Activated CD8-positive, alpha-beta memory T cell treated with anti-CD3 and anti-CD28 coated beads, Interleukin-2, amount 10 ng/mL, durations not matched to agents 7 days and 5 days (primary cell): ENCODE measurements at regions of chr6 and their contacts with region 1.

Region 1: DNA sequence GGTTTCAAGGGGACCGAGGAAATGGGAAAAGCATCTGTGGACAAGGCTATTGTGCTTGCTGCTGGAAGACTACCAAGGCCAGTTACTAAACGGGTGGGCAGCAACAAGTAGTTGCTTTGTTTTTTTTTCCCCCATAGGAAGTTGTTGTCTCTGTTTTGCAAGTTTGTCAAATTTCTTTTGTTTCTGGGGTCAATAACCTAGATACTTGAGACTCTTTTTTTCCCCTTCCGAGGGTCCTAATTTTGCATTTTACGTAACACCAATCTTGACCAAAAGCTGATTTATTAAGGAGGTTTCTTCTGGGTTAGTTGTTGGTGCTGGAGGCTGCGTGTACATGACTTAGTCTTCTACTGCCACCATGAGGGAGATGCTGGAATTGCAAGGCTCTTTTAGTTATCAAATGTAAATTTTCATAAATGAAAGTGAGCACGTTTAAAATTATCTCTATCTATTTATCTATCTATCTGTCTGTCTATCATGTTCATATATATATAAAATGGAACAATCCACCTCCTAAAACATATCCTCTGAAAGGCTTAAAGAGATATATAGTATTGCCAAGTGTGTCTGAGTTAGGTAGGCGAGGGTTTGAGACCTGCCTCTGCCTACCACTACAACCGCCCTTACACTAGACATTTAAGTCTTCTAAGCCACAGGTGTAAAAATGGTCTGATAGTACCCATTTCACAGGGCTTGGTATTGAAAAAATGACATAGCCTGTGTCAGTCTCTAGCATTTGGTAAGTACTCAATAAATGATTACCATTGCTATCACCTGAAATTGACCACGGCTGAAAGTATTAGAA is 60.2 kb downstream of the GCLC start:
- DNase-seq: peak; percentile 82
- ATAC-seq: peak; percentile 42
- H3K4me3 Mint-ChIP-seq: no peak overlapping the region
- H3K27ac Mint-ChIP-seq: no peak overlapping the region
- H3K4me1 Mint-ChIP-seq: peaks cover 35% of the 10 kb centered on the region
- H3K27me3 Mint-ChIP-seq: peaks cover 30% of the 10 kb centered on the region

Region 2: DNA sequence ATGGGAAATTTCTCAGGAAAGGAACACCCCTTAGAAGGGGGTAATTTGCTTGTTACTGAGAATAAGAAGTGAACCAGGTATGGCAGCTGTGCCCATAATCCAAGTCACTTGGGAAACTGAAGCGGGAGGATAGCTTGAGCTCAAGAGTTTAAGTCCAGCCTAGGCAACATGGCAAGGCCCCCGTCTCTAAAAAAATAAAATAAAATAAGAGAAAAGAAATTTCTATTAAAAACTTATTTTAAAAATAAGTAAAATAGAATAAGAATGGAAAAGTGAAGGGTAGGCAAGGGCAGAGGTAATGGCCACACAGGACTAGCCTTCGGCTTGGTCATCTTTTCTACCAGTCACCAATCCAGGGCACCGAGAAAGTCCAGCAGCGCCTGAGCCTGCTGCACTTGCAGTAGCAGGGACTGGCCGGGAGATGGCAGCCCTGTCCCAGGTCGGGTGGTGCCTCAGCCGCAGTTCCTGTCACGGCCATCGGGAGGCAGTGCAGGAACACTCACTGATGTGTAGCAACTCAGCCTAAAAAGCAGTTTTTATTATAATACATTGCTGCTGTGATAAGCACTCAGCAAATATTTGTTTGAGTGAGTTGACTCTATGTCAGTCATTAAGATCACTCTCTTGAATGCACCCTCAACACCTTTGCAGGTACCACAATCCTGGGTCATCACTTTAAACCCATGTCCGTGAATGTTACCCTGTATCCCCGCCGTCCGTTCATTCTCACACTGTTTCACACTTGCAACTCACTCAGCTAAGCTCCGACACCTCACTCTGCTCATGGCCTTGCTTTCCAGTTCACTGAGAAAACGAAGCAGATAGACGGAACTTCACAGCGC is 312.9 kb before region 1 on chr6:
- CTCF ChIA-PET with region 1: interaction called, 96 read pairs
- DNase-seq: peak; percentile 93
- ATAC-seq: peak; percentile 90
- H3K4me3 Mint-ChIP-seq: no peak overlapping the region
- H3K27ac Mint-ChIP-seq: no peak overlapping the region
- H3K4me1 Mint-ChIP-seq: no peaks in the 10 kb centered on the region
- H3K27me3 Mint-ChIP-seq: peaks cover 3% of the 10 kb centered on the region

Region 3: GRCh38 chr6:53410508-53411258 is 74.0 kb before region 1 on chr6:
- CTCF ChIA-PET with region 1: interaction called, 29 read pairs
- DNase-seq: peak; percentile 68
- ATAC-seq: peak; percentile 93
- H3K4me3 Mint-ChIP-seq: no peak overlapping the region
- H3K27ac Mint-ChIP-seq: no peak overlapping the region
- H3K4me1 Mint-ChIP-seq: peaks cover 4% of the 10 kb centered on the region
- H3K27me3 Mint-ChIP-seq: peaks cover 5% of the 10 kb centered on the region

Region 4: GRCh38 chr6:53447869-53448268 is 36.8 kb before region 1 on chr6:
- CTCF ChIA-PET with region 1: interaction called, 10 read pairs
- DNase-seq: no peak
- ATAC-seq: no peak
- H3K4me3 Mint-ChIP-seq: no peak overlapping the region
- H3K27ac Mint-ChIP-seq: no peak overlapping the region
- H3K4me1 Mint-ChIP-seq: no peaks in the 10 kb centered on the region
- H3K27me3 Mint-ChIP-seq: peaks cover 5% of the 10 kb centered on the region